ENCODE measurements at regions of chr6 and their contacts with region 1.

Region 1: DNA sequence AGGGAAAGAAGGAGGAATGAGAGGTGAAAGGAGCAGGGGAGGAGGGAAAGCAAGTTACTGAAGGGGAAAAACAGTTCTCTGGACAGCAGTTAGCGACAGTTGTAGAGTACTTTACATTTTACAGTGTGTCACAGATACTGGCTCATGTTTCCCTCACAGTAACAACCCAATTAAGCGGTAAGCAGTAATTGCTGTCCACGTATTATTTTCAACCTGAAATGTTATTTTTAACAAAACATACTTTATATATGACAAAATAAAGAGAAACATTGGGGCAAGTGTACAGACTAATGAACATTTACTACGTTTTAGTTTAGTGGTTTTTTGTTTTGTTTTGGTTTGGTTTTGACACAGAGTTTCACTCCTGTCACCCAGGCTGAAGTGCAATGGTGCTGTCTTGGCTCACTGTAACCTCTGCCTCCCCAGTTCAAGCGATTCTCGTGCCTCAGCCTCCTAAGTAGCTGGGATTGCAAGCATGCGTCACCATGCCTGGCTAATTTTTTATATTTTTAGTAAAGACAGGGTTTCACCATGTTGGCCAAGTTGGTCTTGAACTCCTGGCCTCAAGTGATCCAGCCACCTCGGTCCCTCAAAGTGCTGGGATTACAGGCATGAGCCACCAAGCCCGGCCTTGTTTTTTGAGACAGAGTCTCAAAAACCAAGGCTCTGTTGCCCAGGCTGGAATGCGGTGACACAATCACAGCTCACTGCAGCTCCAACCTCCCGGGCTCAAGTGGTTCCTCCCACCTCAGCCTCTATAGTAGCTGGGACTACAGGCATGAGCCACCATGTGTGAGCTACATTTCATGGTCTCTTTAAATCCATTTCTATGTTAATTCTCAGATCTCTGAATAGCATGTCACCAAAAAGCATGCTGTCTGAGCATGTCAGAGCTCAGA is 22.6 kb upstream of the BTN3A2 start:
- DNase-seq: no peak
- H3K4me3 ChIP-seq: no peak overlapping the region
- H3K4me3 Mint-ChIP-seq: peak overlapping the region; percentile 72
- H3K27ac Mint-ChIP-seq: no peak overlapping the region
- H3K4me1 ChIP-seq: peaks cover 7% of the 10 kb centered on the region; the same call in 1 of the 2 replicates
- H3K4me1 Mint-ChIP-seq: peaks cover 7% of the 10 kb centered on the region
- H3K27me3 ChIP-seq: no peaks in the 10 kb centered on the region
- H3K27me3 Mint-ChIP-seq: no peaks in the 10 kb centered on the region
- CTCF ChIP-seq: no peak

Region 2: GRCh38 chr6:26421259-26422144 is 79.1 kb after region 1 on chr6:
- CTCF ChIA-PET with region 1: interaction called, 6 read pairs
- POLR2A ChIA-PET with region 1: no interaction called
- intact Hi-C with region 1: loop called (anchors 1 kb)
- DNase-seq: peak; percentile 69 to 71
- H3K4me3 ChIP-seq: peak overlapping the region; percentile 52
- H3K4me3 Mint-ChIP-seq: no peak overlapping the region
- H3K27ac Mint-ChIP-seq: no peak overlapping the region
- H3K4me1 ChIP-seq: 0 out of 2 replicates have a peak, but pooled peaks cover 4% of the 10 kb centered on the region
- H3K4me1 Mint-ChIP-seq: no peaks in the 10 kb centered on the region
- H3K27me3 ChIP-seq: no peaks in the 10 kb centered on the region
- H3K27me3 Mint-ChIP-seq: no peaks in the 10 kb centered on the region
- CTCF ChIP-seq: no peak

Region 3: DNA sequence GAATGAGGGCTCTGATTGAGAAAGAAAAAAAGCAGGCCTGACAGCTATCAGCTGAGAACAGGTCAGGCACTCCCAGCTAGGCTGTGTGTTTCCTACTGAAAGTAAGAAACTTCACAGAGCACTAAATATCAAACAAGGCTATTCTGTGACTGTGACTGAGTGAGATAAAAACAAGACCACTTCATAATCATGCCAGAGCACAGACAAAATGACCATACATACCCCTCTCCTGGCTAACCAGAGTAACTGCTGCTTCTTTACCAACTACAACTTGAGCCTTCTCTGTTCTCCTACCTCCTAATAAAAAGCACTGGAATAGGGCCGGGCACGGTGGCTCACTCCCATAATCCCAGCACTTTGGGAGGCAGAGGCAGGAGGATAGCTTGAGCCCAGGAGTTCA is 150.9 kb after region 1 on chr6:
- CTCF ChIA-PET with region 1: interaction called, 7 read pairs
- POLR2A ChIA-PET with region 1: no interaction called
- intact Hi-C with region 1: loop called (anchors 1 kb)
- DNase-seq: peak in 1 of 2 experiments; percentile 18
- H3K4me3 ChIP-seq: no peak overlapping the region
- H3K4me3 Mint-ChIP-seq: no peak overlapping the region
- H3K27ac Mint-ChIP-seq: peak overlapping the region; percentile 66
- H3K4me1 ChIP-seq: peaks cover 55% of the 10 kb centered on the region
- H3K4me1 Mint-ChIP-seq: peaks cover 40% of the 10 kb centered on the region
- H3K27me3 ChIP-seq: no peaks in the 10 kb centered on the region
- H3K27me3 Mint-ChIP-seq: no peaks in the 10 kb centered on the region
- CTCF ChIP-seq: peak in 1 of 2 experiments; percentile 31

Region 4: DNA sequence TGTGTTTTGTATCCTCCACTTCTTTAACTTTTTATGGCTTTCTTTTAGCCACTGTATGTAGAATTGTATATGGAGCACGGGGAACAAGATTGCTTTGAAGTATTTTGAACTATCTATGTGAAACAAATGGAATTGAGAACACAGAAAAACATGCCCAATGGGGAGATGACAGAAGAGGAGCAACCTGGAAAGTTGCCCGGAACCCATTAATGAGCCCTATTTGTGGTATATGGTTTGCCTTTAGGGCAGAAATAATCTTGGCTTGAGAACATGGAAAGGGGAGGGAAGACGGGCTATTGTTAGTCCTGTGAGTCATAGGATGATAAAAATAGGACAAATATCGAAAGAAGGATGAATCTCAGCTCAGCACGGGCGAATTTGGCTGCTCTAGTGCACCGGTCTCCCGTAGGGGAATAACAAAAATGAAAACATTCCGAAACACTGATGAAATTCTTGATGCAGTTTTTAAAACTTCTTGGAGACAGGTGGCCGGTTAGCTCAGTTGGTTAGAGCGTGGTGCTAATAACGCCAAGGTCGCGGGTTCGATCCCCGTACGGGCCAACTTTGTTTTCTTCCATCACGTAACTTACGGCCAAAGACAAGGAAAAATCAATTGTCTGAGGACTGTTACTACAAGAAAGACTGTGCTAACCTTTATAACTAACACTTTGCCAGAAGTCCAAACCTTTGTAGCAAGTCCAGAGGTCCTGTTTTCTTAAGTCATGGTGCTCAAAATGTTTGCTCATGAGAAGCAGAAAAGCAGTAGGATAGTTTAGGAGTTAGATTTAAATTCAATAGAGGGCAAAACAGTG is 211.5 kb after region 1 on chr6:
- CTCF ChIA-PET with region 1: interaction called, 11 read pairs
- POLR2A ChIA-PET with region 1: no interaction called
- intact Hi-C with region 1: loop called (anchors 1 kb)
- DNase-seq: peak; percentile 74 to 86
- H3K4me3 ChIP-seq: peak overlapping the region; percentile 55
- H3K4me3 Mint-ChIP-seq: no peak overlapping the region
- H3K27ac Mint-ChIP-seq: no peak overlapping the region
- H3K4me1 ChIP-seq: peaks cover 5% of the 10 kb centered on the region; the same call in 1 of the 2 replicates
- H3K4me1 Mint-ChIP-seq: peaks cover 8% of the 10 kb centered on the region
- H3K27me3 ChIP-seq: no peaks in the 10 kb centered on the region
- H3K27me3 Mint-ChIP-seq: no peaks in the 10 kb centered on the region
- CTCF ChIP-seq: no peak

Region 5: DNA sequence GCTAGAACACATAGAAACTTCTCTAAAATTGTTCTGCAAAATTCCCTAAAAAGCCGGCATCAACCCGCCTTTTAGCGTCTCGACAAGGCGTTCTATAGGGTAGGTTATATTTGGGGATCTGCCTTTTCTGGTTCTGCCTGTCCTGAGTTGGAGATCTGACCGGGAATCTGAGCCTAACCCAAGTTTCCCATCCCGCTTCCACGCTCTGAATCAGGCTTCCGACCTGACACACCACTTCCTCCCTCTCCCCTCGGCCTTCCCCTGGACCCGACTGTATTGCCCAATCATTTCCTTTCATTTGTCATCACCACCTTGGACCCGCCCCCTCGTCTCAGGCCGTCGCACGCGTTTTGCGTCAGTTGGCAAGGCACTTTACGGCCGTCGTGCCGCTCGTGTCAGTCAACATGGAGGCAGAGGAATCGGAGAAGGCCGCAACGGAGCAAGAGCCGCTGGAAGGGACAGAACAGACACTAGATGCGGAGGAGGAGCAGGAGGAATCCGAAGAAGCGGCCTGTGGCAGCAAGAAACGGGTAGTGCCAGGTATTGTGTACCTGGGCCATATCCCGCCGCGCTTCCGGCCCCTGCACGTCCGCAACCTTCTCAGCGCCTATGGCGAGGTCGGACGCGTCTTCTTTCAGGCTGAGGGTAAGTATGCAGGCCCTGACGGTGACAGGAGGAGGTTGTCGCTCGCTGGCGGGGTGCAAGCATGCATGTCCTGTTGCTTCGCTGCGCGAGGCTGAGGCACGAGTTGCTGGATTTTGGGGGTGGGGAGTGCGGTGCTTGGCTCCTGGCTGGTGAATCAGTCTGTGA is 254.4 kb after region 1 on chr6 and contains the start of gene ABT1:
- CTCF ChIA-PET with region 1: interaction called, 34 read pairs
- POLR2A ChIA-PET with region 1: no interaction called
- intact Hi-C with region 1: loop called (anchors 1 kb)
- DNase-seq: peak; percentile 97 to 98
- H3K4me3 ChIP-seq: peak within 1 kb of the TSS; percentile 91
- H3K4me3 Mint-ChIP-seq: no peak within 1 kb of the TSS
- H3K27ac Mint-ChIP-seq: no peak within 1 kb of the TSS
- H3K4me1 ChIP-seq: no peaks in the 10 kb centered on the region
- H3K4me1 Mint-ChIP-seq: no peaks in the 10 kb centered on the region
- H3K27me3 ChIP-seq: no peaks in the 10 kb centered on the region
- H3K27me3 Mint-ChIP-seq: peaks cover 3% of the 10 kb centered on the region
- CTCF ChIP-seq: no peak
- total RNA-seq, gene ABT1: 15.1 and 17.0 TPM in 2 replicates

Measured in Caco-2 (cell line).